Activated CD4-positive, alpha-beta memory T cell treated with anti-CD3 and anti-CD28 coated beads, Interleukin-2, amount 10 ng/mL, durations not matched to agents 7 days and 5 days (primary cell): ENCODE measurements at regions of chr1 and their contacts with region 1.

Region 1: DNA sequence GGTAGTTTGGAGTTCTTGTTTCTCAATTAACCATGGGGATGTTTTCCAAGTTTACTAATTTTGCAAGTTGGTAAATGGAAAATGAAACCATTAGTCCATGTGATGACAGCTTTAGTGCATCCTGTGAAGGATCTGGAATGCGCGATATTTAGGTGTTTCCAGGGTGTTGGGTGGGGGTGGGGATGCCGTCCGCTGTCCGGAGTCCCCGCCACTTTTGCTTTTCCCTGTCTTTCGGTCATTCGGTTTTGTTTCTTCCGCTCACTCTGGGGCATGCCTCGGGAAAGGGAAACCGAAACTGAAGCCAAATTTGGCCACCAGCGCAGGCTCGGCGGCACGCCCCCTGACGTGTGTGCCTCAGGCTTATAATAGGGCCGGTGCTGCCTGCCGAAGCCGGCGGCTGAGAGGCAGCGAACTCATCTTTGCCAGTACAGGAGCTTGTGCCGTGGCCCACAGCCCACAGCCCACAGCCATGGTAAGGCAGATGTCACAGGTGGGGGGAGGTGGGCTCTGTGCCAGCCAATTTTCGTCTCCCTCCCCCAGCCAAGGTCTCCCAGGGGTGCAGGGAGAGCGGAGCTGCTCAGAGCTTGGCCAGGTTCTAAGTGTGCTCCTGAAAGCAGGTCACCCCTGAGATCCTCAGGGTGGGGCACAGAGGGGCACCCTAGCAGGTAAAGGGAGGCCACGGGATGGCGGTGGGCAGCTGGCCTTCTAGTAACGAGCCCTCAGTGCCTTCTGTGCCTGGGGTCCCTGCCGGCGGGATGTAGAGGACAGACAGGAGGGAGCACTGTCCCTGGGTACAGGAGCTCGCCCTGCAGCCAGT is at the start of gene ISG15:
- DNase-seq: peak; percentile 94
- H3K4me3 Mint-ChIP-seq: peak within 1 kb of the TSS; percentile 95
- H3K27ac Mint-ChIP-seq: peak within 1 kb of the TSS; percentile 95
- H3K4me1 Mint-ChIP-seq: peaks cover 40% of the 10 kb centered on the region
- H3K27me3 Mint-ChIP-seq: peaks cover 7% of the 10 kb centered on the region
- total RNA-seq, gene ISG15: 593 to 623 TPM

Region 2: GRCh38 chr1:1001461-1002204 is 11.7 kb before region 1 on chr1:
- CTCF ChIA-PET with region 1: interaction called, 17 read pairs
- POLR2A ChIA-PET with region 1: interaction called, 18 read pairs
- DNase-seq: peak; percentile 73
- H3K4me3 Mint-ChIP-seq: no peak overlapping the region
- H3K27ac Mint-ChIP-seq: no peak overlapping the region
- H3K4me1 Mint-ChIP-seq: peaks cover 18% of the 10 kb centered on the region
- H3K27me3 Mint-ChIP-seq: peaks cover 46% of the 10 kb centered on the region

Region 3: GRCh38 chr1:1040004-1040991 is 27.0 kb after region 1 on chr1:
- CTCF ChIA-PET with region 1: interaction called, 4 read pairs
- POLR2A ChIA-PET with region 1: interaction called, 25 read pairs
- DNase-seq: peak; percentile 89
- H3K4me3 Mint-ChIP-seq: peak overlapping the region; percentile 69
- H3K27ac Mint-ChIP-seq: no peak overlapping the region
- H3K4me1 Mint-ChIP-seq: peaks cover 19% of the 10 kb centered on the region
- H3K27me3 Mint-ChIP-seq: peaks cover 27% of the 10 kb centered on the region

Region 4: GRCh38 chr1:1063945-1064831 is 50.9 kb after region 1 on chr1:
- CTCF ChIA-PET with region 1: interaction called, 13 read pairs
- POLR2A ChIA-PET with region 1: interaction called, 3 read pairs
- DNase-seq: peak; percentile 87
- H3K4me3 Mint-ChIP-seq: peak overlapping the region; percentile 66
- H3K27ac Mint-ChIP-seq: peak overlapping the region; percentile 64
- H3K4me1 Mint-ChIP-seq: peaks cover 53% of the 10 kb centered on the region
- H3K27me3 Mint-ChIP-seq: no peaks in the 10 kb centered on the region

Region 5: DNA sequence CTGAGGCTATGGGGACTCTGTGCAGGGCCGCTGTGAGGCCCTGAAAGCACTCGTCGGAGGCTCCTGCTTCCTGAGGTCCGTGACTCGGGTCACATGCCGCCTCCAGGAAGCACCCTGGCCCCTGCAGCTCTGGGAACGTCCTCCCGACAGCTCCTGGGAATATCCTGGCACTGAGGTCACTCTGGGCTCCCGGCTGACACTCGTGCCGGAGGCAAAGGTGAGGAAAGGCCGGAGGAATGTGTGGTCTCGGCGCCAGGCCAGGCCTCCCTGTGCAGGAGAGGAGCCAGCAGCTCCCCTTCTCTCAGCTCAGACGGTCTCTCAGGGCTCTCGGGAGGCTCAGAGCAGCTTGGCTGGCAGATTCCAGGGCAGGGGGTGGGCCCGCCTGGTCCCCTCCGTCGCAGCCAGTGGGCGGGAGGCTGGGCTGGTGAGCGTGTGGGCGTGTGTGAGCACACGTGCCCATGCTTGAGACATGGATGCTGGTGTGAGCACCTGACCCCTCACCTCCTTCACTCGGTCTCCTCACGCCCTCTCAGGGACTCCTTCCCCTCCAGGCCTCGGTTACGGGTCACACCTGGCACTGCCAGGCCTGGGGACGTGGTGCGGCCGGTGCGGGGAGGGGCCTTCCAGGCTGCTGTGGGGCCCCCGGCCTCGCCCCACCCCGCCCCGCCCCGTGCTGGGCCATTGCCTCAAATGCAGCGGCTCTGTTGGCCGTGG is 66.3 kb after region 1 on chr1:
- CTCF ChIA-PET with region 1: no interaction called
- POLR2A ChIA-PET with region 1: no interaction called
- DNase-seq: no peak
- H3K4me3 Mint-ChIP-seq: no peak overlapping the region
- H3K27ac Mint-ChIP-seq: no peak overlapping the region
- H3K4me1 Mint-ChIP-seq: peaks cover 6% of the 10 kb centered on the region
- H3K27me3 Mint-ChIP-seq: peaks cover 3% of the 10 kb centered on the region

Region 6: GRCh38 chr1:1250786-1251284 is 237.5 kb after region 1 on chr1:
- CTCF ChIA-PET with region 1: no interaction called
- POLR2A ChIA-PET with region 1: no interaction called
- DNase-seq: peak; percentile 82
- H3K4me3 Mint-ChIP-seq: no peak overlapping the region
- H3K27ac Mint-ChIP-seq: peak overlapping the region; percentile 54
- H3K4me1 Mint-ChIP-seq: peaks cover 16% of the 10 kb centered on the region
- H3K27me3 Mint-ChIP-seq: peaks cover 4% of the 10 kb centered on the region